ENCODE measurements at regions of chr11 and their contacts with region 1.

Region 1: DNA sequence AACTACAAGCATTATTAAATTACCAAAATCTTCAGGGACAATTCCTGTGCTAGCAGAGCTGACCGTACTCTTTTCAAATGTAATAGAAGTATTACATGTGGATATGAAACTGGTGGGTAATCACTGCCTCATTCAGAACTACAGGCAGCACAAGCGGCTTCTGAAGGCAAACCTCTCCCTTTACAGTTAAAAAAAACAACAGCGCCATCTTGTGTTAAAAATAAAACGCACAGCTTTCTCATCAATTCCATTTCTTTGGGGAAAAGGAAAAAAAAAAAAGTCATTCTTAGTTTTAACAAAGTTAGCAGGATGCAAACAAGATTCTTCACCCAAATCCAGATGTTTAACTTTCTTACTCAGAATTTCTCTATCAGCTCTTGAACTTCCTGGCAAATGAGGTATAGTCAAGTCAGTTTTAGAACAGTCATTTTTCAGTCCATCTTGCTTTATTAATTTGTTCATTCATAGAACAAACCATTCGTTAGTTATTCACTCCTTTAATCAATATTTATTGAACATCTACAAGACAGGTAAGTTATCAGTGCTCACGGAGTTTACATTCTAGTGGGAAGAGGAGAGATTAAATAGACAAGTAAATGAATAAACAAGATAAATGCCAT is 331.8 kb upstream of the MPPED2 start:
- DNase-seq: peak; percentile 23
- CTCF ChIP-seq: peak; percentile 34

Region 2: GRCh38 chr11:29432719-29433325 is 1485.1 kb before region 1 on chr11:
- in situ Hi-C with region 1: loop called (anchors 25 kb)
- DNase-seq: peak; percentile 22
- CTCF ChIP-seq: peak; percentile 22

Region 3: DNA sequence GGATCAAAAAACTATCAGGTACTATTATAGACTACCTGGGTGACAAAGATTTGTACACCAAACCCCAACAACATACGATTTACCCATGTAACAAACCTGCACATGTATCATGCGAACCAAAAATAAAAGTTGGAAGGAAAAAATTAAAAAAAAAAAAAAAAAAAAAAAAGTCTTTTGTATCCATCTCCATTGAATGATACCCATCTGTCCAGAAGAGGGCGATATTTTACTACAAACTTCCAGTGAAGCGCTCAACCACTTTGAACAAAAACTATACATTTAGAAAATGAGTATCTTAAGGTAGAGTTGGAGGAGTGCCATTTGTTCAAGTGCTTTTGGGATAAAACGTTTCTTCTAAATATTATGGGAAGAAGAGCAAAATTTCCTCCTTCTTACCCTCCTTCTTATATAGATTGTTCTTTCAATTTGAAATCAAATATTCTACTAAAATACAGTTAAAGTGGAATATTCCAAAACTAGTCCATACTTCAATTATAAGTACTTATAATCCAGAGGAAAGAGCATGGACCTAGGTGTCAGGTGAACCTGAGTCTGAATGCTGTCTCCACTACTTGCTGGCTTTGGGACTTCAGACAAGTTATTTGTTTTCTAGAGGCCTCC is 571.8 kb before region 1 on chr11:
- in situ Hi-C with region 1: loop called (anchors 10 kb)
- DNase-seq: peak; percentile 27
- CTCF ChIP-seq: no peak

Measured in GM13976 (cell line).